ENCODE measurements at regions of chr22 and their contacts with region 1.

Region 1: GRCh38 chr22:45163451-45164269 is at the start of gene NUP50:
- DNase-seq: peak; percentile 94 to 97 (median 96)
- H3K4me3 ChIP-seq: peak within 1 kb of the TSS; percentile 64 to 98 (median 76)
- H3K27ac ChIP-seq: peak within 1 kb of the TSS; percentile 47 to 99 (median 83)
- H3K4me1 ChIP-seq: peaks cover 24 to 52% of the 10 kb centered on the region in 2 donors
- H3K27me3 ChIP-seq: no peaks in the 10 kb centered on the region
- CTCF ChIP-seq: no peak
- POLR2A ChIP-seq: peak; percentile 56 to 82
- total RNA-seq, gene NUP50: 48.9 to 126 (median 67.4) TPM

Region 2: DNA sequence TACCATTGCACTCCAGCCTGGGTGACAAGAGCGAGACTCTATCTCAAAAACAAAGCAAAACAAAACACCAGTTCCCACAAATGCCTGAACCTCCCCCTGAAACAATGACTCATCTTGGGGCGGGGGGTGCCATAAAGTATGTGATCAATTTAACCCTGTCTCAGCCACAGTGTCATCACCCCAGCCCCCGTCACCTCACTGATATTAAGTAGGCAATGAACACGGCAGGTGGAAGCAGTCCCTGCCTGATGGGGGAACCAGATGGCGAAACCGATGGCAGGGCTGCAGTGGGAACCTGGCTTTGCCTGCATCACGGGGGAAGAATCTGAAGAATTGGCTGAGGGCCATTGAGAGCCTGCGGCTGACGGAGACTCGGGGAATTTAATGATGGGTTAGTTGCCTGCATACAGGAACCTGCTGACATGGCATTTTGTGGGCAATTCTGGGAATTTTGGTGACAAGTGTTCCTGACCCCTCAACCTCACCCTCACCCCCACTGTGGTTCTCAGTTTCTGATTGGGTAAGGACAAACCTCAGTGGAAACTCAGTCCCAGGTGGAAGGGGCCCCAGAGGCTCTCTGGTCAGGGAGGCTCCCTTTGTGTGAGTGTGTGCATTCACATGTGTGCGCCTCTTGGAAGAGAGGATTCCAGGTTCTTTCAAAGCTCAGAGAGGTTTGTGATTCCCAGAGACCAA is 811.8 kb before region 1 on chr22:
- intact Hi-C with region 1: no loop called
- DNase-seq: peak in 5 of 7 donors; percentile 37 to 54 (median 49)
- H3K4me3 ChIP-seq: no peak overlapping the region
- H3K27ac ChIP-seq: no peak overlapping the region
- H3K4me1 ChIP-seq: peaks cover 0 to 9% of the 10 kb centered on the region in 2 donors
- H3K27me3 ChIP-seq: no peaks in the 10 kb centered on the region
- CTCF ChIP-seq: no peak
- POLR2A ChIP-seq: no peak

Region 3: GRCh38 chr22:45240810-45241631 is 77.4 kb after region 1 on chr22 and contains the start of gene KIAA0930:
- intact Hi-C with region 1: loop called in 1 of 2 experiments (anchors 10 kb)
- DNase-seq: peak; percentile 78 to 90 (median 85)
- H3K4me3 ChIP-seq: peak within 1 kb of the TSS in 3 of 4 donors; percentile 40 to 85 (median 49)
- H3K27ac ChIP-seq: peak within 1 kb of the TSS in 1 of 5 donors; percentile 46
- H3K4me1 ChIP-seq: peaks cover 0 to 25% of the 10 kb centered on the region in 2 donors
- H3K27me3 ChIP-seq: no peaks in the 10 kb centered on the region
- CTCF ChIP-seq: no peak
- POLR2A ChIP-seq: no peak
- total RNA-seq, gene KIAA0930: 40.3 to 142 (median 90.9) TPM

Region 4: DNA sequence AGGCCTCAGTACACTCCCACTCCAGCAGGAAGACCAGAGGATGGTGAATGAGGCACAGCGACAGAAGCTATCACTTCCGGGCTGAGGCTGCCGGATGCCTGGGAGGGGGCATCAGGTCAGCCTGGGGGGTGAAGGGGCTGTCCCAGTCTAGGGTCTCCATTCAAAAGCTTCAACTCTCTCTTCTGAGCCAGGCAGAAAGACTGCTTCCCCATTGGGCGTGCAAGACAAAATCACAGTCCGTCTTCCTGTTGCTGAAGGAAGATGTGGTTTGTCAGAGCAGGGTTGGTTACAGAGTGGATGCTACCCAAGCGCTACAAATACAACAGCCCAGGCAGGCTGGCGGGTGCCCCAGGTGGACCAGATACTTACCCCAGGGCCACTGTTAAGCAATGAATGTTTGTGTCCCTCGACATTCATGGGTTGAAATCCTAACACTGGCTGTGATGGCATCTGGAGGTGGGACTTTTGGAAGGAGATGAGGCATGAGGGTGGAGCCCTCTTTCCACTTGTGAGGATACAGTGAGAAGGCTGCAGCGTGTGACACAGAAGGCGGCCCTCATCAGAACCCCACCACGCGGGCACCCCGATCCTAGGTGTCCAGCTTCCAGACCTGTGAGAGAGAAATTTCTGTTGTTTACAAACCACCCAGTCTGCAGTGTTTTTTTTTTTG is 133.1 kb after region 1 on chr22:
- intact Hi-C with region 1: no loop called
- DNase-seq: no peak
- H3K4me3 ChIP-seq: no peak overlapping the region
- H3K27ac ChIP-seq: no peak overlapping the region
- H3K4me1 ChIP-seq: no peaks in the 10 kb centered on the region
- H3K27me3 ChIP-seq: no peaks in the 10 kb centered on the region
- CTCF ChIP-seq: no peak
- POLR2A ChIP-seq: no peak

Measured in adrenal gland (tissue), 19 donors.